Transverse colon (tissue), 4 donors: ENCODE measurements at regions of chr17 and their contacts with region 1.

Region 1: DNA sequence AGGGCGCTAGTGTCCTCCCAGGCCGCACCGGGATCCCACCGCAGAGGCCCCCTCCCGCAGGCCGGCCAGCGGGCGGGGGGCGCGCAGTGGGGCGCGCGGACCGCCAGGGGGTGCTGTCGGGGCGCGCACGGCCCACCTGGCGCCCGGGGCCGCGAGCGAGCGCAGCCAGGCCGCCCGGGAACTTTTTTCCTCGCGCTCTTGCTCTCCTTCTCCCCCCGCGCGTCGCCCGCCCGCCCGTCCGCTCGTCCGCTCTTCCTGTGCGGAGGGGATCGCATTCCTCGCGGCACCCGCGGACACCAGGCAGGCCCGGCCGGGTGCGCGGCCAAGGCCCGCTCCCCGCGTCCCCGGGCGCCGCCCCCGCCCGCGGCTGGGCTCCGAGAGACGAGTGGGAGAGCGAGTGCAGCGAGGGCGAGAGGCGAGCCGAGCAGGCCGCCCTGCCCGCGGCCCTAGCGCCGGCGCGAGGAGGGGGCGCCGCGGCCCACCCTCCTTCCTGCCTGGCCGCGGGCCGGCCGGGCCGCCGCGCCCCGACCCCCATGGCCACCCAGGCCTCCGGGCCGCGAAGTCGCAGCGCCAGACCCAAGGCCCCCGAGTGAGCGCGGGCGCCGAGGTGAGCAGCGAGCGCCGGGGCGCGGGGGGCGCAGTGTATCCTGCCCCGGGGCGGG is at the start of gene RAI1:
- DNase-seq: peak; percentile 80
- H3K4me3 ChIP-seq: peak within 1 kb of the TSS; percentile 49 to 90 (median 74)
- H3K27ac ChIP-seq: peak within 1 kb of the TSS; percentile 89 to 98 (median 92)
- H3K4me1 ChIP-seq: peaks cover 17 to 36% (median 26%) of the 10 kb centered on the region in 4 donors
- H3K27me3 ChIP-seq: no peaks in the 10 kb centered on the region
- CTCF ChIP-seq: peak in 4 of 5 experiments; percentile 42 to 74 (median 64)
- EP300 ChIP-seq: no peak
- POLR2A ChIP-seq: no peak
- total RNA-seq, gene RAI1: 14.1 to 163 (median 34.6) TPM

Region 2: GRCh38 chr17:17344462-17345293 is 336.6 kb before region 1 on chr17:
- in situ Hi-C with region 1: no loop called
- intact Hi-C with region 1: no loop called
- DNase-seq: no peak
- H3K4me3 ChIP-seq: no peak overlapping the region
- H3K27ac ChIP-seq: no peak overlapping the region
- H3K4me1 ChIP-seq: no peaks in the 10 kb centered on the region
- H3K27me3 ChIP-seq: no peaks in the 10 kb centered on the region
- CTCF ChIP-seq: no peak
- EP300 ChIP-seq: no peak
- POLR2A ChIP-seq: no peak

Region 3: GRCh38 chr17:17783116-17783824 is 102.0 kb after region 1 on chr17:
- in situ Hi-C with region 1: loop called in 3 of 4 experiments (anchors 10 to 25 kb)
- intact Hi-C with region 1: loop called (anchors 5 kb)
- DNase-seq: peak; percentile 60
- H3K4me3 ChIP-seq: peak overlapping the region; percentile 41 to 56 (median 50)
- H3K27ac ChIP-seq: peak overlapping the region; percentile 72 to 93 (median 79)
- H3K4me1 ChIP-seq: peaks cover 18 to 62% (median 50%) of the 10 kb centered on the region in 4 donors
- H3K27me3 ChIP-seq: peaks cover 14% of the 10 kb centered on the region
- CTCF ChIP-seq: peak in 3 of 5 experiments; percentile 1 to 19 (median 11)
- EP300 ChIP-seq: no peak
- POLR2A ChIP-seq: no peak

Region 4: GRCh38 chr17:17890773-17891759 is 209.7 kb after region 1 on chr17:
- in situ Hi-C with region 1: loop called in 1 of 4 experiments (anchors 25 kb)
- intact Hi-C with region 1: no loop called
- DNase-seq: peak; percentile 50
- H3K4me3 ChIP-seq: no peak overlapping the region
- H3K27ac ChIP-seq: no peak overlapping the region
- H3K4me1 ChIP-seq: peaks cover 0 to 2% (median 0%) of the 10 kb centered on the region in 4 donors
- H3K27me3 ChIP-seq: no peaks in the 10 kb centered on the region
- CTCF ChIP-seq: peak; percentile 49 to 78 (median 61)
- EP300 ChIP-seq: no peak
- POLR2A ChIP-seq: no peak